ACHN (cell line): ENCODE measurements at regions of chr12 and their contacts with region 1.

Region 1: GRCh38 chr12:64293654-64294364 is 71.7 kb upstream of the KICS2 start:
- DNase-seq: no peak

Region 2: DNA sequence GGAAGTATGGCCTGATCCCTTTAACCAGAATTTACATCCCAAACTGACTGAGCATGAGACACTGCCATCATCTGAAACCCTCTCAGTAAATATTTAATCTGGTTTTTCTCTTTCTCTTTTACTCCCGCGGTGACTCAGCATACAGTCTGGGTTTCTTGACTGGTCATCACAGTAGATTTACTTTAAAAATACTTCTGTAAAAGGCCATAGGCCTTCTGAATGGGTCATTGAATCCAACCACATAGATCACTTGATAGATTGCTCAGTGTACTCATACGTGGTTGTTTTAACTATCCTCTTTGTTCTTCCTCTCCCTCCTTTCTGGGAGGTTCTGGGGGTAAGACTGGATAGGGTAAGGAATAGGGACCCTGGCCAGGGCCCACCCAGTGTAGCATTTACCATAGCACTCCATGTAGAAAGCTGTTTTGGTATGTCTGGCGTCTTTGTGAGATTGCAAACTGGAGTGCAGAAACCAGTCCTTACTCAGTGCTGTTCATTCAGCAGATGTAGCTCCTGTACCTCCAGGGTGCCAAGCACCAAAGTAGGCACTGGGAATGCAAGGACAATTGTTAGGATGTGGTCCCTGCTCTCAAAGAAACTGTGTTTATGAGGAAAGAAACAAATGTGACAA is 283.6 kb before region 1 on chr12:
- in situ Hi-C with region 1: no loop called
- DNase-seq: peak; percentile 98

Region 3: GRCh38 chr12:64088431-64089349 is 205.1 kb before region 1 on chr12:
- in situ Hi-C with region 1: no loop called
- DNase-seq: peak; percentile 99

Region 4: DNA sequence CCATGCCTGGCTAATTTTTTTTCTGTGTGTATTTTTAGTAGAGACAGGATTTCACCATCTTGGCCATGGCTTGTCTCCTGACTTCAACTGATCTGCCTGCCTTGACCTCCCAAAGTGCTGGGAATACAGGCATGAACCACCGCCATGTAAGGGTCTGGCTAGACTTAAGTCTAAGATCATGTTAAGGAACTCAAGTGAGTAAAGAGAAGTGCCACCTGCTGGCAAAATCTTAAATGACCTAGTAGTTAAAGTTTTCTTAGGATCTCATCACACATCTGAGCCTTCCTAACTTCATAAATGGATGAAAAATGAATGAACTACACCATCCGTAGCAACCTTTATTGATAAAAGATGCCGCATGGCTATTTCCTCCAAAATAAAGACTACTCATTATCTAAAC is 98.4 kb after region 1 on chr12:
- in situ Hi-C with region 1: loop called (anchors 25 kb)
- DNase-seq: peak; percentile 75